ENCODE measurements at regions of chr2 and their contacts with region 1.

Region 1: DNA sequence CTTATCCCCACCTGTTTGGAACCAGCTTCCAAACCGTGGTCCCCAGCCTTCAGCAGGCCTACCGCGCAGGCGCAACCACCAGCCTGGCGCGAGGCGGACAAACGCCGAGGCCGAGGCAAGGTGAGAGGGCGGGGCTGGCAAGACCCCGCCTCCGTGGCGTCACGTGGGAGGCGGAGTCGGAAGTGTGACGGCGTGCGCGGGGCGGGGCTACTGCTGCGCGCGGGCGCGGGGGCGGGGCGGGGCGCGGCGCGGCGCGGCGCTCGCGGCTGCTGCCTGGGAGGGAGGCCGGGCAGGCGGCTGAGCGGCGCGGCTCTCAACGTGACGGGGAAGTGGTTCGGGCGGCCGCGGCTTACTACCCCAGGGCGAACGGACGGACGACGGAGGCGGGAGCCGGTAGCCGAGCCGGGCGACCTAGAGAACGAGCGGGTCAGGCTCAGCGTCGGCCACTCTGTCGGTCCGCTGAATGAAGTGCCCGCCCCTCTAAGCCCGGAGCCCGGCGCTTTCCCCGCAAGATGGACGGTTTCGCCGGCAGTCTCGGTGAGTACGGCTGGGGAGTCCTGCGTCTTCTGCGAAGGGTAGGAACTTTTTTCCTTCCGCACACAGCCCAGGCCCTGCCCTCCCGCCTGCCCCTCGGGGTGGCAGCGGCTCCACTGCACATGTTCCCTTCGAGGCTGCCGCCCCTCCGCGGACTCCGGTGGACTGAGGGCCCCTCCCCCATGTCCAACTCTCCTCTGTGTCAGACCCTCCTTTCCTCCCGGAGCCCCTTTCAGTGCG is at the start of gene EML4:
- DNase-seq: peak; percentile 90
- ATAC-seq: peak; percentile 93
- H3K4me3 ChIP-seq: peak within 1 kb of the TSS; percentile 92
- H3K27ac ChIP-seq: peak within 1 kb of the TSS; percentile 85
- H3K4me1 ChIP-seq: peaks cover 11% of the 10 kb centered on the region
- H3K27me3 ChIP-seq: no peaks in the 10 kb centered on the region
- CTCF ChIP-seq: no peak
- POLR2A ChIP-seq: peak; percentile 90
- RAD21 ChIP-seq: no peak
- total RNA-seq, gene EML4: 73.7 and 85.8 TPM in 2 replicates

Region 2: DNA sequence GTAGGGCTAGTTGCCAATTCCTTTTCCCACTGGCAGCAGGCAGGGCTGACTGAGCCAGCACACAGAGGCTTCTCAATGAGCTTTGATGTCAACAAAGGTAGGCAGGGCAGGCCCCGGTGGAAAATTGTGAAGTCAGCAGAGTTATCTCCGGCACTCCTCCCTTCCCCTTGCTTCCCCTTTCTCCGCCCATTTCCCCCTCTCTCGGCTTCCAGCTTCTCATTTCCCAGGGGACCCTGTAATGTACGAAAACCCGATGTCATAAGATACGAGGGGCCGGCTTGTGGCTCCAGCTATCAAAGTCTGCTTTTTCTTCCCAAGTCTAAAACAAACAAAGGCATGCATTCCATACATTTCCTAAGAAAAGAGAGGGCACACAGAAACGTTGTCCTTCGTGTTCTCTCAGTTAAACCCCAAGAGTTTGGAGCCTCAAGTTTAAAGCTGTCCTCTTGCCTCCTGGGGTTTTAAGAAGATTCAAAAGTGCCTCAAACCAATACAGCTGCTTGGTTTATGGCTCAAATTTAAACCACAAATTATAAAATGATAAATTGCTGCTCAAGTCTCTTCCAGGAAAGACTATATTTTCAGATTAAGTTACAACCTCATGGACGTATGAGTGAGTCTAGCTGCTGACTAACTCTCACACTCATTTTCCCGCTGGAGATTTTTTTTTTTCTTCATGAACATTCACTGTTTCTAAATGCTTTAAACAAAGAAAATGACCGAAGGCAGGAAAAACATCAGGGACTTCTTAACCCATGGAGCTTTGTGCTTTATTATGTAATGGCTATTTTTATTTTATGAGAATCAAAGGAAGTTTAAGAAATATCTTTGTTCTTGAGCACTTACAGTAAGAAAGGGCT is 27.4 kb before region 1 on chr2:
- CTCF ChIA-PET with region 1: interaction called, 3 read pairs
- POLR2A ChIA-PET with region 1: no interaction called
- dilution Hi-C with region 1: no loop called
- in situ Hi-C with region 1: no loop called
- intact Hi-C with region 1: loop called (anchors 2 kb)
- DNase-seq: peak; percentile 93
- ATAC-seq: peak; percentile 69
- H3K4me3 ChIP-seq: peak overlapping the region; percentile 28
- H3K27ac ChIP-seq: peak overlapping the region; percentile 89
- H3K4me1 ChIP-seq: peaks cover 25% of the 10 kb centered on the region
- H3K27me3 ChIP-seq: no peaks in the 10 kb centered on the region
- CTCF ChIP-seq: no peak
- POLR2A ChIP-seq: no peak
- RAD21 ChIP-seq: no peak

Region 3: GRCh38 chr2:42186221-42186765 is 17.0 kb after region 1 on chr2:
- CTCF ChIA-PET with region 1: no interaction called
- POLR2A ChIA-PET with region 1: interaction called, 3 read pairs
- dilution Hi-C with region 1: no loop called
- in situ Hi-C with region 1: no loop called
- intact Hi-C with region 1: loop called (anchors 2 kb)
- DNase-seq: no peak
- ATAC-seq: peak; percentile 55
- H3K4me3 ChIP-seq: no peak overlapping the region
- H3K27ac ChIP-seq: peak overlapping the region; percentile 38; the same call in 1 of the 2 replicates
- H3K4me1 ChIP-seq: peaks cover 19% of the 10 kb centered on the region
- H3K27me3 ChIP-seq: no peaks in the 10 kb centered on the region
- CTCF ChIP-seq: no peak
- POLR2A ChIP-seq: no peak
- RAD21 ChIP-seq: no peak

Region 4: GRCh38 chr2:42233976-42234441 is 64.7 kb after region 1 on chr2:
- CTCF ChIA-PET with region 1: no interaction called
- POLR2A ChIA-PET with region 1: no interaction called
- dilution Hi-C with region 1: no loop called
- in situ Hi-C with region 1: no loop called
- intact Hi-C with region 1: loop called (anchors 5 kb)
- DNase-seq: peak; percentile 89
- ATAC-seq: peak; percentile 91
- H3K4me3 ChIP-seq: no peak overlapping the region
- H3K27ac ChIP-seq: peak overlapping the region; percentile 78
- H3K4me1 ChIP-seq: peaks cover 7% of the 10 kb centered on the region
- H3K27me3 ChIP-seq: no peaks in the 10 kb centered on the region
- CTCF ChIP-seq: no peak
- POLR2A ChIP-seq: no peak
- RAD21 ChIP-seq: no peak

Region 5: GRCh38 chr2:42249887-42250286 is 80.6 kb after region 1 on chr2:
- CTCF ChIA-PET with region 1: no interaction called
- POLR2A ChIA-PET with region 1: no interaction called
- dilution Hi-C with region 1: no loop called
- in situ Hi-C with region 1: no loop called
- intact Hi-C with region 1: loop called (anchors 5 kb)
- DNase-seq: no peak
- ATAC-seq: no peak
- H3K4me3 ChIP-seq: no peak overlapping the region
- H3K27ac ChIP-seq: no peak overlapping the region
- H3K4me1 ChIP-seq: no peaks in the 10 kb centered on the region
- H3K27me3 ChIP-seq: no peaks in the 10 kb centered on the region
- CTCF ChIP-seq: no peak
- POLR2A ChIP-seq: no peak
- RAD21 ChIP-seq: no peak